Dendritic cell treated with granulocyte-macrophage colony-stimulating factor and Interleukin-4, amounts not matched to agents 40 ng/mL and 50 ng/mL, for 4 days (primary cell): ENCODE measurements at regions of chr16 and their contacts with region 1.

Region 1: DNA sequence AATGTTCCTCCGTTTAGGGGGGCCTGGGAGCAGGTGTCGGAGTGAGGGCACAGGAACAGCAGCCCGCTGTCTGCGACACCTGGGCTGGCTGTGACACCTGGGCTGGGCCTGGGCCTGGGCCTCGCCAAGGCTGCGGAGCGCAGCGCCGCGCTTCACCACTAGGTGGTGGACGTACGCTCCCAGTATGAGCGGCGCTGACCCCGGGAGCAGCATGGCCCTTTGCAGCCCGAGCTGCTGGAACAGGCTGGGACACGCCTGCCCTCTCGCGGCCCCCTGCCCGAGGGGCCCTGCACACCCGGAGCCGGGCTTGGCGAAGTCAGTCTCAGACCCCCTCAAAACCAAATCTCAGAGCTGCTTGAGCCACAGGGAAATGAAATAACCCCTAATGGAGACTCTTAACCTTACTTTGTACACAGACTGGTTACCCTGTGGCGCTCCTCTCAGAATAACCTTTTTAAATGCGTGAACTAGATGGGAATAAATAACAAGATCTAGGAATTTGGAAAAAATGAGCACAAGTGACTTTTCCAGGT is 38.6 kb upstream of the FA2H start:
- H3K4me3 Mint-ChIP-seq: no peak overlapping the region
- H3K27ac Mint-ChIP-seq: no peak overlapping the region
- H3K4me1 Mint-ChIP-seq: peaks cover 5% of the 10 kb centered on the region
- H3K27me3 Mint-ChIP-seq: peaks cover 21% of the 10 kb centered on the region

Region 2: GRCh38 chr16:74800216-74800871 is 12.8 kb before region 1 on chr16:
- intact Hi-C with region 1: no loop called
- H3K4me3 Mint-ChIP-seq: no peak overlapping the region
- H3K27ac Mint-ChIP-seq: no peak overlapping the region
- H3K4me1 Mint-ChIP-seq: no peaks in the 10 kb centered on the region
- H3K27me3 Mint-ChIP-seq: peaks cover 25% of the 10 kb centered on the region

Region 3: GRCh38 chr16:74862741-74863244 is 49.6 kb after region 1 on chr16:
- intact Hi-C with region 1: loop called (anchors 1 kb)
- H3K4me3 Mint-ChIP-seq: no peak overlapping the region
- H3K27ac Mint-ChIP-seq: no peak overlapping the region
- H3K4me1 Mint-ChIP-seq: peaks cover 9% of the 10 kb centered on the region
- H3K27me3 Mint-ChIP-seq: peaks cover 6% of the 10 kb centered on the region

Region 4: DNA sequence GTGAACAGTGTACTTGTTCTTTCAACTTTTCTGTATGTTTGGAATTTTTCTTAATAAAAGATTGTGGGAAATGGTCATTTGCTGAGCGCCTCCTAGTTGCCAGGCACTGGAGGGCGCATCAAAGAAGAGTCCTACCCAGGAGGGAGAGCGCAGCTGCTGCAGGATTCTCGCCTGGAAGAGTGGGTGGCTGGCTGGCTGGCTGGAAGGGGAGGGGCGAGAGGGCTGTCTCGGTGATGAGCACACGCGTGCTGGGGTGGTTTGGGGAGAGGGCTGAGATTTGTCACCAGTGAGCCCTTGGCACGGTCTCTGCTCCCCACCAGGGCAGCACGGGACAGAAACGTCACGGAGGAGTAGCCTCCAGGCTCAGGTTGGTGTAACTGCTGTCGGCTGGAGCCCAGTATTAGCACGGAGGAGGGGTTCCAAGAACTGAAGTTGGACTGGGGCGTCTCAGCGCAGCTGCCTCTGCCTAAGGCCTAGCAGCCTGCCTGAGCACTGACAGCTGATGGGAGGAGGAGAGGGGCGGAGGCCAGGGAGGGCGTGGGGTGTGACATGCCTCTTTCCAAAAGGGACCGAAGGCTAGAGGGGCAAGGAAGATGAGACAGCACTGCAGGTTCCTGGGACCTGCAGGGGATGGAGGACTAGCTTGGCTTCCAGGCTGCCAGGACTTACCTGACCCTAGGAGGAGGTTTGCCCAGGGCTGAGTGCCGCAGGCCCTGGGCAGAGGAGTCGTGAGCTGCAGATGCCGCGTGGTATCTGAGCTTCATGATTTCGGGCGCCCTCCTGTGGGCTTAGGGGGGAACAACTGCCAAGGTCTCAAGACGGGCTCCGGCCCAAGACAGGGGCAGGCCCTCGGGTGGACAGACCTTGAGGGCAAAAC is 297.7 kb after region 1 on chr16:
- intact Hi-C with region 1: loop called (anchors 5 kb)
- H3K4me3 Mint-ChIP-seq: peak overlapping the region; percentile 28
- H3K27ac Mint-ChIP-seq: peak overlapping the region; percentile 80
- H3K4me1 Mint-ChIP-seq: peaks cover 78% of the 10 kb centered on the region
- H3K27me3 Mint-ChIP-seq: peaks cover 32% of the 10 kb centered on the region